Transverse colon (tissue), 4 donors: ENCODE measurements at regions of chr15 and their contacts with region 1.

Region 1: DNA sequence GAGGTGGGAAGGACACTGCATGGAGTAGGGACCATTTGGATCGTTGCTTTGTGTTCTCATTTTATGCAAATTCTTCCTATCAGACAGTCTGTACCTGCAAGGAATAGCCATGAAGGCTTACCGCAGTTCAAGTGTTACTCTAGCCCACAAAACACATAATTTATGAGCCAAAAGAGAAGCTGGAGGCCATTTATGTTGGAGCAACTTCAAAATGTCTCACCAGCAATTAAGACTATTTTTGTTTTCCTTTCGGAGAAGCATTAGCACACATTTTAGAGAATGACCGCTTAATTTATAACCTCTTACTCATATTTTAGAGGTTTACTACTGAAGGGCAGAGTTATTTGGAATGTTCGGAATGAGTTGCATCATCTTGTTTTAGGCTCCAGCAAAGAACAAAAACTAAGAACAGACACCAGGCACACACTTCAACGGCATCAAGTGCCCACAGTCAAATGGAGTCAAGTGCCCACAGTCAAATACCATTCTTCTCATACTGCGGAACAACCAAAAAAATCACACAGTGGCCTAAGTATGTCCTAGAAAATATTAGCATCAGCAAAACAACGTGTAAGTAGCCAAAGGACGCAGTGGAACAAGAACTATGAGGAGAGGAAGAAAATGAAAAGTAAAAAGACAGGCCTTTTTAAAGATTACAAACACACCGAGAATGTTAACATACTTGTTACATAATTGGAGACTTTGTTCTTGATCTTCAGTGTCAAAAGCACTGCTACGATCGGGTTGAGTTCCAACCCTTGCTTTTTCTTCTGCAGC is 17.5 kb upstream of the GOLGA8J start:
- DNase-seq: no peak
- H3K4me3 ChIP-seq: no peak overlapping the region
- H3K27ac ChIP-seq: peak overlapping the region in 1 of 4 donors; percentile 10
- H3K4me1 ChIP-seq: no peaks in the 10 kb centered on the region
- H3K27me3 ChIP-seq: no peaks in the 10 kb centered on the region
- CTCF ChIP-seq: no peak
- EP300 ChIP-seq: no peak
- POLR2A ChIP-seq: no peak

Region 2: DNA sequence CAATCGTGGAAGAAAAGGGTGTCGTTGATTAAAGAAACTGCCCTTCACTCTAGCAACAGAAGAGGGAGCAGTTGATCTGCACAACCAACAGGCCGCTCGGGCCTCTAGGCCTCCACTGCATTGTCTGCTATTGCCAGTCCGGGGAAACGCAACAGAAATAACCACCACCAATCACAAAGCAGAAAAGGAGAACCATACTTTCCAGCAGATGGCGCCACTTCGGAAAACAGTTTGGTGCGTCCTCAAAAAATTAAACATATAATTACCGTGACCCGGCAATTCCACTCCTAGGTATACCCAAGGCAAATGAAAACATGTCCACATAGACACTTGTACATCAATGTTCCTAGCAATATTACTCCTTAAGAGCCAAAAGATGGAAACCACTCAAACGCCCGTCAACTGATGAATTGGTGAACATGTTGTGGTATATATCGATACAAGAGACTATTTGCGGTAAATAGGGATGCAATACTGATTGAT is 397.1 kb before region 1 on chr15:
- in situ Hi-C with region 1: loop called in 1 of 4 experiments (anchors 25 kb)
- intact Hi-C with region 1: no loop called
- DNase-seq: peak; percentile 83
- H3K4me3 ChIP-seq: no peak overlapping the region
- H3K27ac ChIP-seq: no peak overlapping the region
- H3K4me1 ChIP-seq: peaks cover 0 to 24% (median 12%) of the 10 kb centered on the region in 4 donors
- H3K27me3 ChIP-seq: no peaks in the 10 kb centered on the region
- CTCF ChIP-seq: peak; percentile 65 to 96 (median 86)
- EP300 ChIP-seq: no peak
- POLR2A ChIP-seq: no peak